Sigmoid colon (tissue), 7 donors: ENCODE measurements at regions of chr12 and their contacts with region 1.

Region 1: DNA sequence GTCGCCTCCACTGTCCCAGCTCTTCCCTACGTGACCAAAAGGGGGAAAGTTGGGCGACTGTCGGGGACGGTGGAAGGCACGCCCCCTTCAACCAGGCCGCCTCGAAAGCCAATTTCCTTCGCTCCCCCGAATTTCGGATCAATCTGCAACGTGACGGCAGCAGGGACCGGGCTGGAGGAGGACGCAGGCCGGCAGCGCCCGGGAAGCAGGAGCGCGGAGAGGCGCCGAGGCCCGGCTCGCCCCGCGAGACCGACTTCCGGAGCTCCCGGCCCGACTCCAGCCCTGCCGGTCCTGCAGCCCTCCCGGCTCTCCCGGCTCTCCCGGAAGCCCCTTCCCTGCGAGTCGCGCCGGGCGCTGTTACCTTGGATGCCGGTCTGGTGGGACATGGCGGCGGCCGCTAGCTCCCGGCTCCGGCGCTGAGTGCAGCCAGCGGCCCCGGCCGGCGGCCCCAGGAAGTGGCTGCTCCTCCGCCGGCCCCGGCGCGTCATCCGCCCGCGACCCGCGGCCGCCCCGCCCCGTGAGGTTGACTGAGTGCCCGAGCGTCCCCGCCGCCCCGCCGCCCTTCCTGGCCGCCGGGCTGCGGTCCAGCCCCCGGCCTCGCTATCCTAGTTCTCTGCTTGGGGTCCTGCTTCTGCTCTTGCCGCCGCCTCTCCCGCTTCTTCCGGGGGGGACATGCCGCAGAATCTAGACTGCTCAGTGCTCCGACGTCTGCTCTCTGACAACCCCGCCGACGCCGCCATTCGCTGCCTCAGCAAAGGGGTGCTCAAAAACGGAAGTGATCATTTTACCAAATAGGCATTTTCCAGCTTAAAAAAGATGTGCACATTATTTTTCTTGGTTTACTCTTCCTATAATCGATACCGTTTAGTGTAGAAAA is at the start of gene TWF1:
- DNase-seq: peak; percentile 91
- H3K4me3 ChIP-seq: peak within 1 kb of the TSS; percentile 80 to 97 (median 90)
- H3K27ac ChIP-seq: peak within 1 kb of the TSS; percentile 95 to 97 (median 96)
- H3K4me1 ChIP-seq: peaks cover 0 to 33% (median 26%) of the 10 kb centered on the region in 4 donors
- H3K27me3 ChIP-seq: no peaks in the 10 kb centered on the region
- CTCF ChIP-seq: peak in 3 of 4 experiments; percentile 27 to 45 (median 34)
- EP300 ChIP-seq: no peak
- POLR2A ChIP-seq: peak in 1 of 2 donors; percentile 10
- total RNA-seq, gene TWF1: 72.6 to 133 (median 101) TPM

Region 2: DNA sequence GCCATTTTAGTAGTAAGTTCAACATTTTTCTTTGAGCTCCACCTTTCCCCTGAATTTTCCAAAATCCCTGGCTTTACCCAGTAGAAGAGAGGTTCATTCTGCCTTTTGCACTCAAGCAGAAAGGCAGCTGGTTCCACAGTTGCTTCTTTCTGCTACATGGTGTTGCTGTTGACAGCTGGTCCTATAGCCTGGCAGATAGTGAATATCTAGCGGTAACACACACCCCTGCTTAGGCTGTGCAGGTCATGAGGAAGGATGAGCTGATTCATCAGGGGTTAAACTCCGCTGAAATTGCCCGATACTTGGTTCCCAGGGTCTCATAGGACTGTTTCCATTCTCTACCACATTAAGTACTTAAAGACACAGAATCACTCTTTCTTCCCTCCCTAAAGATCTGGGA is 109.9 kb before region 1 on chr12:
- intact Hi-C with region 1: no loop called
- DNase-seq: no peak
- H3K4me3 ChIP-seq: no peak overlapping the region
- H3K27ac ChIP-seq: no peak overlapping the region
- H3K4me1 ChIP-seq: no peaks in the 10 kb centered on the region
- H3K27me3 ChIP-seq: no peaks in the 10 kb centered on the region
- CTCF ChIP-seq: no peak
- EP300 ChIP-seq: no peak
- POLR2A ChIP-seq: no peak

Region 3: GRCh38 chr12:43723134-43723533 is 83.0 kb before region 1 on chr12:
- intact Hi-C with region 1: no loop called
- DNase-seq: no peak
- H3K4me3 ChIP-seq: no peak overlapping the region
- H3K27ac ChIP-seq: no peak overlapping the region
- H3K4me1 ChIP-seq: no peaks in the 10 kb centered on the region
- H3K27me3 ChIP-seq: no peaks in the 10 kb centered on the region
- CTCF ChIP-seq: no peak
- EP300 ChIP-seq: no peak
- POLR2A ChIP-seq: no peak

Region 4: GRCh38 chr12:43758728-43759563 is 47.2 kb before region 1 on chr12 and contains the starts of genes IRAK4 and PUS7L:
- intact Hi-C with region 1: loop called (anchors 1 kb)
- DNase-seq: peak; percentile 98
- H3K4me3 ChIP-seq: peak within 1 kb of the TSS; percentile 51 to 77 (median 70)
- H3K27ac ChIP-seq: peak within 1 kb of the TSS; percentile 81 to 90 (median 82)
- H3K4me1 ChIP-seq: peaks cover 0 to 30% (median 20%) of the 10 kb centered on the region in 4 donors
- H3K27me3 ChIP-seq: no peaks in the 10 kb centered on the region
- CTCF ChIP-seq: peak in 3 of 4 experiments; percentile 14 to 48 (median 23)
- EP300 ChIP-seq: peak in 1 of 4 donors; percentile 16
- POLR2A ChIP-seq: peak; percentile 55 to 65
- total RNA-seq, gene IRAK4: 24.5 to 34.3 (median 26.5) TPM
- total RNA-seq, gene PUS7L: 6.3 to 17.1 (median 8.9) TPM

Region 5: GRCh38 chr12:43835656-43836474 is 29.8 kb after region 1 on chr12 and contains the start of gene TMEM117:
- intact Hi-C with region 1: loop called (anchors 1 kb)
- DNase-seq: peak; percentile 84
- H3K4me3 ChIP-seq: peak within 1 kb of the TSS; percentile 69 to 80 (median 74)
- H3K27ac ChIP-seq: peak within 1 kb of the TSS; percentile 95 to 98 (median 96)
- H3K4me1 ChIP-seq: peaks cover 0 to 23% (median 13%) of the 10 kb centered on the region in 4 donors
- H3K27me3 ChIP-seq: no peaks in the 10 kb centered on the region
- CTCF ChIP-seq: no peak
- EP300 ChIP-seq: no peak
- POLR2A ChIP-seq: no peak
- total RNA-seq, gene TMEM117: 17.5 to 21.4 (median 18.9) TPM

Region 6: DNA sequence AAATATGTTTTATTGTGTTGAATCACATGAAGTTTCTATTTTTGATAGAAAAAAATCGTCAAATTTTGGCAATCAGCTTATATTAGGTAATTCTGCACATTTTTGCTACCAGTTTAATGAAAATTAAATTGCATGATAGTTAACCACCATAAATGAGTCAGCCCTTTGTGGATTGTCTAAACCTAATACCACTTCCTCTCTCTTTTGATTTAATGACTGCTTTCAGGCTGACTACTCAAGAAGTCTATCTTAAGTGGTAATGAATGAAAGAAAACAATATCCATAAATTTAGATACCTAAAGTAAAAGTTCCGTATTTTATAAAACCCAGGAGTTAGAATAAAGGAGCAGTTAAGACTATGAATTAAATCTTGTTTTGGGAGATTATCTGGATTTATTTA is 480.2 kb after region 1 on chr12:
- intact Hi-C with region 1: no loop called
- DNase-seq: no peak
- H3K4me3 ChIP-seq: no peak overlapping the region
- H3K27ac ChIP-seq: no peak overlapping the region
- H3K4me1 ChIP-seq: peaks cover 0 to 17% (median 6%) of the 10 kb centered on the region in 4 donors
- H3K27me3 ChIP-seq: no peaks in the 10 kb centered on the region
- CTCF ChIP-seq: no peak
- EP300 ChIP-seq: no peak
- POLR2A ChIP-seq: no peak